GM10248 (cell line): ENCODE measurements at regions of chr20 and their contacts with region 1.

Region 1: GRCh38 chr20:8853805-8854338 is 215.0 kb upstream of the PLCB4 start:
- DNase-seq: peak; percentile 46
- CTCF ChIP-seq: peak; percentile 87

Region 2: GRCh38 chr20:8837396-8837795 is 16.5 kb before region 1 on chr20:
- CTCF ChIA-PET with region 1: interaction called, 12 read pairs
- POLR2A ChIA-PET with region 1: no interaction called
- DNase-seq: no peak
- CTCF ChIP-seq: no peak

Region 3: DNA sequence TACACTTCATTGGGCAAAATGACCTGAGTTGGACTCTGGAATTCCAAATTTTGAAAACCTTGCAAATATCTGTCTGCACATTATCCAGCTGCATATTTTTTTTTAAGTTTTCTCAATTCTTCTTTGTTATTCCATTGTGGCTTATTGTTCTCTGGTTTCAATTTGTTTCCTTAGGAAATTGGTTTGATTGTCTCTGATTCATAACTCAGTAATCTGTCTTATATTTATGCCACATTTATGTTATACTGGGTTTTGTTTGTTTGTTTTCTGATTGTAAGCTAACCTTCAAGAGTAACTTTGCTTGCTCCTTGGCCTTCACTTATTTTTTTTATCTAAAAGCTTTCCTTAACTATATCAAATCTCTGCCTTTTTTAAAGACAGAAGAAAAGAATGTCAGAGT is 21.7 kb after region 1 on chr20:
- CTCF ChIA-PET with region 1: interaction called, 11 read pairs
- POLR2A ChIA-PET with region 1: no interaction called
- DNase-seq: no peak
- CTCF ChIP-seq: no peak